AG04450 (cell line): ENCODE measurements at regions of chr4 and their contacts with region 1.

Region 1: DNA sequence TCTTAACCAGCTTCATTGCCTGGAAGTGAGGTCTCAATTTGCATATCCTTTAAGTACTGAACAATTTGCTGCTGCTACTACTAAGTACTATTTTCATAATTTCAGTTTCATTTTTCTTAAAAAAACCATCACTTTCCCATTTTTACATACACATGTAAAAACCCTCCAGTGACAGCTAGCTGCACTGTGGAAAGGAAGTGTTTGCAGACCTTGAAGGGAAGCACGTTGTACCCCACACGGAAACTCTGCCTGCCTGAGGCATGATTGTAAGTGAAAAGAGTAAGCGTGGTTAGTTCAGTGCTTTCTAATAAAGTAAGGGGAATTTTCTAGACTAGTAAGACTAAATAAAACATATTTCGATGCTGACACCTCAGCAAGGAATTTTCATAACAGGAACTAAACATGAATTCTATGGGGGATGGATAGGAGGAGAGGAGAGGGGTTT is 103.6 kb downstream of the RAPGEF2 start:
- DNase-seq: no peak
- H3K4me3 ChIP-seq: no peak overlapping the region
- H3K27ac ChIP-seq: no peak overlapping the region
- H3K27me3 ChIP-seq: no peaks in the 10 kb centered on the region
- CTCF ChIP-seq: no peak

Region 2: DNA sequence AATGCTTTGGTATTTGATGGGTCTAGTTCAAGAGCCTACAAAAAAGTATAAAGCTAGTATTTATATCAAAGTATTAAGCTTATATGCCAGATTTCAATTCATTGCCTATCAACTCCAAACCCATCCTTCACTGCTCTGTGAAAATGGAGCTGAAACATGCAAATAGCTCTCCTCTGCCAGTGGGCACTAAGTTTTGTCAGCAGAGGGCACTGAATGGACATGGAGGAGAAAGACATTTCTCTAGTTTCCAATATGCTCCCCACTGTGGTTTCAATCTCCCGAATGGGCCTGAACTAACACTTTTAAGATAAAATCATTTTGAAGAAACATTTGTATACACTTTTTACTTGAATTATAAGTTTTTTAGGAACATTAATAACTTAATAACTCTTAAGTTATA is 495.6 kb before region 1 on chr4:
- CTCF ChIA-PET with region 1: interaction called, 11 read pairs
- POLR2A ChIA-PET with region 1: no interaction called
- DNase-seq: no peak
- H3K4me3 ChIP-seq: no peak overlapping the region
- H3K27ac ChIP-seq: no peak overlapping the region
- H3K27me3 ChIP-seq: no peaks in the 10 kb centered on the region
- CTCF ChIP-seq: peak; percentile 40

Region 3: DNA sequence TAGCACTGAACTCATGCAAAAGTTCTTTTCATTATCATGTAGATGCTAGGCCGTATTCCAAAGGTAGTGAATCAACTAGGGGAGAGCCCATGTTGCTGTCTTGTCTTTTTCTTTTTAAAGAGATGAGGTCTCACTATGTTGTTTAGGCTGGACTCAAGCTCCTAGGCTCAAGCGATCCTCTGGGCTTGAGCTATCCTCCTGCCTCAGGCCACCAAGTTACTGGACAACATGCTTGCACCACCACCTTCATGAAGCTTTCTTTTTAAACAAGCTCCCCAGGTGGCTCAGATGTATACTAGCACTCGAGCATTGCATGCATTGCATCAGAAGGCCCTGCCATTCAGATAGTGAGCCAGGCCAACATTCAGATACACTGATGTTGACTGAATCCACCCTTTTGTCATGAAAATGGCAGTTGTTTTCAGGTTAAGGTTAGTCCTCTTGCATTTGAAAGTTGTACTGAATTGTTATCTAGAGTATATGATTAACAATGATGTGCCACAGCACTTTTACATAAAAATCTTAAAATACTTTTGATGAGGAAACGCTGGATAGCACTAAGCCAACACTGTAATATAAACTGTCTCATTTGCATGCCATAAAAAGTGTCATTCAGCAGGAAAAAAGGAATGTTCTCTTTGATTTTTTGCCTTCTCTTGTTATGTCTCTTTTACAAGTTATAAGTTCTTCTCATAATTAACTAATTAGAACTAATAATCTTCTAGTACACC is 361.0 kb before region 1 on chr4:
- CTCF ChIA-PET with region 1: interaction called, 48 read pairs
- POLR2A ChIA-PET with region 1: no interaction called
- DNase-seq: no peak
- H3K4me3 ChIP-seq: no peak overlapping the region
- H3K27ac ChIP-seq: no peak overlapping the region
- H3K27me3 ChIP-seq: no peaks in the 10 kb centered on the region
- CTCF ChIP-seq: no peak

Region 4: DNA sequence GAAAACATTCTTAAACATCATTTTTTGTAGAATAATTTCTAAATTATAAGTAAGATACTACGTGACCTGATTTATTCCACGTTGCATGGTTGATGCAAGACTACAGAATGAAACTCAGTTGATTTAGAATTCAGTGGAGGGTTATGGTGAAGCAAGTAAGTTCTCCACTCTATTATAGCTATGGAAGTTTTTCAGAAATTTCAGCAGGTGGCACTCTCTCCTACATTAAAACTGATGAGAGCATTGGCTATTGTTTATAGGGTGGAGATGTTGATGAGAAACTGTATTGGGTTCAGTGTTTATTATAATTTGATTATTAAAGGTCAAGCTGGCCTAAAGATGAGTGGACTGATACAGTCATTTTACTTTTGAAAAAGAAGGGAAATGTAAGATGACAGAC is 349.6 kb before region 1 on chr4:
- CTCF ChIA-PET with region 1: interaction called, 86 read pairs
- POLR2A ChIA-PET with region 1: no interaction called
- DNase-seq: peak; percentile 8
- H3K4me3 ChIP-seq: no peak overlapping the region
- H3K27ac ChIP-seq: no peak overlapping the region
- H3K27me3 ChIP-seq: no peaks in the 10 kb centered on the region
- CTCF ChIP-seq: peak; percentile 64

Region 5: DNA sequence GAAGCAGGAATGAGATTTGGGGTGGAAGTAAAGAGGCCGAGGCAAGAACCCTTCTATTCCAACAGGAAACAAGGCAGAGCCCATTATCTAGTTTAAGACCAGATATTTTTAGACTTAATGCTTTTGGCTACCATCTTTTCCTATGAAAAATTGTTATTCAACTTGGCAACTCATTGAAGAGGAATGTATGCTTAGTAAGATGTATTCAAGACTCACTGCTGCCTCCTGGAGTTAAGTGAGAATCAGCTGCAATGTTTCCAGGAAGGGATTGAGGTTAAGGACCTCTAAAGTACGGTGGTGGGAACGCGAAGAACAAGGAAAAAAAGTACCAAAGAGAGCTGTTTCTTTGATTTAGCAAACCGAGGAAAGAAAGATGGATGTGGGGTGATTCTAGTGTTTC is 14.5 kb before region 1 on chr4:
- CTCF ChIA-PET with region 1: interaction called, 16 read pairs
- POLR2A ChIA-PET with region 1: no interaction called
- DNase-seq: no peak
- H3K4me3 ChIP-seq: no peak overlapping the region
- H3K27ac ChIP-seq: no peak overlapping the region
- H3K27me3 ChIP-seq: no peaks in the 10 kb centered on the region
- CTCF ChIP-seq: peak; percentile 54

Region 6: GRCh38 chr4:159227984-159228383 is 21.5 kb after region 1 on chr4:
- CTCF ChIA-PET with region 1: interaction called, 26 read pairs
- POLR2A ChIA-PET with region 1: no interaction called
- DNase-seq: peak; percentile 85
- H3K4me3 ChIP-seq: peak overlapping the region; percentile 50
- H3K27ac ChIP-seq: peak overlapping the region; percentile 78
- H3K27me3 ChIP-seq: no peaks in the 10 kb centered on the region
- CTCF ChIP-seq: peak; percentile 56